ENCODE measurements at regions of chr11 and their contacts with region 1.

Region 1: GRCh38 chr11:63023841-63024648 is 8.4 kb upstream of the SLC22A8 start:
- DNase-seq: peak; percentile 96
- H3K4me3 ChIP-seq: no peak overlapping the region
- H3K27ac ChIP-seq: no peak overlapping the region
- H3K4me1 ChIP-seq: peaks cover 4% of the 10 kb centered on the region
- H3K27me3 ChIP-seq: no peaks in the 10 kb centered on the region
- CTCF ChIP-seq: peak; percentile 99 to 100 (median 99)
- POLR2A ChIP-seq: no peak

Region 2: DNA sequence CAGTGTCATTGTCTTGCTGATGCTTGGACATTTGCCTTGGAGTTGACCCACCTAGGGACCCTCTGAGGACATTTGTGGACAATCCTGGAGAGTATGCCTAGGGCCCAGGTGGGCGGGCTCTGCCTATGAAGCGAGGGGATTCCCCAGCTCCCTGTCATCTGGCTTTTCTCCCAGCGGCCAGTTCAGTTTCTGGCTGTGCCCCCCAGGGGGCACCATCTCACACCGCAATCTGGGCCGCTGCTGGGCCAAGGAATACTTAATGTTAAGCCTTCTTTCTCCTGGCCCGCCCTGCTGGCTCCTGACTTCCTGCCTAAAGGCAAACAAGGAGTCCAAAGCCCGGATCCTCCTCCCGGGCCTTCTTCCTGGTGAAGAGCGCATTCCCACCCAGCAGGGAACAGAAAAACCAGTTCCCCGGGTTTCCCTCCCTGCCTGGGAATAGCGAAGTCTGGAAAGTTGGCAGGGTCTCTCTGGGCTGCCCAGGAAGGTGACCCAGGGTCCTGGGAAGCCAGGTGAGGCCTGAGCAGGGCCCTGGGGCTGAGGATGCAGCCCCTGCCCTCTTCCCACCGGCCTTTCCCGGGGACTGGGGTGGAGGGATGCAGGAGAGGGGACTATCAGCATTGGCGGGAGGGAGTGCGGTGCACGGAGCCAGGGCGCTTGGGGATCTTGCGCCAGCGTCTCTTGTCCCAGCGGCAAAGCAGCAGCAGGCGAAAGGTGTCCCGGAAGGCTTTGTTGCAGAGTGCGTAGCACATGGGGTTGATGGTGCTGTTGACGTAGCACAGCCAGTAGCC is 114.7 kb before region 1 on chr11:
- intact Hi-C with region 1: loop called (anchors 2 kb)
- DNase-seq: peak; percentile 45
- H3K4me3 ChIP-seq: no peak overlapping the region
- H3K27ac ChIP-seq: no peak overlapping the region
- H3K4me1 ChIP-seq: peaks cover 8% of the 10 kb centered on the region
- H3K27me3 ChIP-seq: no peaks in the 10 kb centered on the region
- CTCF ChIP-seq: peak; percentile 32 to 40 (median 36)
- POLR2A ChIP-seq: no peak